Caco-2 (cell line): ENCODE measurements at regions of chr2 and their contacts with region 1.

Region 1: GRCh38 chr2:223860809-223861738 is 23.7 kb upstream of the AP1S3 start:
- DNase-seq: peak; percentile 92 to 94
- H3K4me3 ChIP-seq: no peak overlapping the region
- H3K4me3 Mint-ChIP-seq: peak overlapping the region; percentile 76
- H3K27ac Mint-ChIP-seq: peak overlapping the region; percentile 100
- H3K4me1 ChIP-seq: peaks cover 78% of the 10 kb centered on the region
- H3K4me1 Mint-ChIP-seq: peaks cover 66% of the 10 kb centered on the region
- H3K27me3 ChIP-seq: no peaks in the 10 kb centered on the region
- H3K27me3 Mint-ChIP-seq: no peaks in the 10 kb centered on the region
- CTCF ChIP-seq: peak; percentile 28 to 60

Region 2: DNA sequence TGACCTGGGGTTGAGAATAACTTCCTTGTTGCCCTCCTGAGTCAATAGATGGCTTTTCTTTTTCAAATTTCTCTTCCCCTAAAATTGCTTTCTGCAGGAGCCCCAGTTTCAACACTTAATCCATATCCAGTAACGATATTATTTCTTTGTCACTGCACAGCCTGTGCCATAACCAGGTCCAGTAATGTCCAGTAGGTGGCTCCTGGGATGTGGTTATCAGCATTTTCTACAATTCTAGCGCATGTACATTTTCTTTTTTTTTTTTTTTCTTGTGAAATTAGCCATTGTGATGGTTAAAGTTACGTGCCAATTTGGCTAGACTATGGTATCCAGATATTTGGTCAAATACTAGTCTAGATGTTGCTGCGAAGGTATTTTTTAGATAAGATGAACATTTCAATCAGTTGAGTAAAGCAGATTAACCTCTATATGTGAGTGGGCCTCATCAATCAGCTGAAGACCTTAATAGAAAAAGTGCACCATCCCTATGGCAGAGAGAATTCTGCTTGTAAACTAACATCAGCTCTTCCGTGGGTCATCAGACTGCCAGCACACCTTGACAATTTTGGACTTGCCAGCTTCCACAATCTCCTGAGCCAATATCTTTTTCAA is 186.0 kb before region 1 on chr2:
- CTCF ChIA-PET with region 1: interaction called, 3 read pairs
- POLR2A ChIA-PET with region 1: no interaction called
- intact Hi-C with region 1: loop called (anchors 1 kb)
- DNase-seq: peak; percentile 52 to 70
- H3K4me3 ChIP-seq: no peak overlapping the region
- H3K4me3 Mint-ChIP-seq: no peak overlapping the region
- H3K27ac Mint-ChIP-seq: no peak overlapping the region
- H3K4me1 ChIP-seq: no peaks in the 10 kb centered on the region
- H3K4me1 Mint-ChIP-seq: peaks cover 7% of the 10 kb centered on the region
- H3K27me3 ChIP-seq: no peaks in the 10 kb centered on the region
- H3K27me3 Mint-ChIP-seq: peaks cover 3% of the 10 kb centered on the region
- CTCF ChIP-seq: peak; percentile 88 to 97

Region 3: GRCh38 chr2:223734346-223734745 is 126.7 kb before region 1 on chr2:
- CTCF ChIA-PET with region 1: no interaction called
- POLR2A ChIA-PET with region 1: no interaction called
- intact Hi-C with region 1: no loop called
- DNase-seq: no peak
- H3K4me3 ChIP-seq: no peak overlapping the region
- H3K4me3 Mint-ChIP-seq: no peak overlapping the region
- H3K27ac Mint-ChIP-seq: no peak overlapping the region
- H3K4me1 ChIP-seq: peaks cover 5% of the 10 kb centered on the region; the same call in 1 of the 2 replicates
- H3K4me1 Mint-ChIP-seq: no peaks in the 10 kb centered on the region
- H3K27me3 ChIP-seq: no peaks in the 10 kb centered on the region
- H3K27me3 Mint-ChIP-seq: no peaks in the 10 kb centered on the region
- CTCF ChIP-seq: no peak

Region 4: GRCh38 chr2:223744573-223744972 is 116.5 kb before region 1 on chr2:
- CTCF ChIA-PET with region 1: interaction called, 7 read pairs
- POLR2A ChIA-PET with region 1: no interaction called
- intact Hi-C with region 1: loop called (anchors 1 kb)
- DNase-seq: peak; percentile 89 to 90
- H3K4me3 ChIP-seq: no peak overlapping the region
- H3K4me3 Mint-ChIP-seq: peak overlapping the region; percentile 52
- H3K27ac Mint-ChIP-seq: peak overlapping the region; percentile 85
- H3K4me1 ChIP-seq: peaks cover 34% of the 10 kb centered on the region
- H3K4me1 Mint-ChIP-seq: peaks cover 37% of the 10 kb centered on the region
- H3K27me3 ChIP-seq: no peaks in the 10 kb centered on the region
- H3K27me3 Mint-ChIP-seq: no peaks in the 10 kb centered on the region
- CTCF ChIP-seq: no peak

Region 5: DNA sequence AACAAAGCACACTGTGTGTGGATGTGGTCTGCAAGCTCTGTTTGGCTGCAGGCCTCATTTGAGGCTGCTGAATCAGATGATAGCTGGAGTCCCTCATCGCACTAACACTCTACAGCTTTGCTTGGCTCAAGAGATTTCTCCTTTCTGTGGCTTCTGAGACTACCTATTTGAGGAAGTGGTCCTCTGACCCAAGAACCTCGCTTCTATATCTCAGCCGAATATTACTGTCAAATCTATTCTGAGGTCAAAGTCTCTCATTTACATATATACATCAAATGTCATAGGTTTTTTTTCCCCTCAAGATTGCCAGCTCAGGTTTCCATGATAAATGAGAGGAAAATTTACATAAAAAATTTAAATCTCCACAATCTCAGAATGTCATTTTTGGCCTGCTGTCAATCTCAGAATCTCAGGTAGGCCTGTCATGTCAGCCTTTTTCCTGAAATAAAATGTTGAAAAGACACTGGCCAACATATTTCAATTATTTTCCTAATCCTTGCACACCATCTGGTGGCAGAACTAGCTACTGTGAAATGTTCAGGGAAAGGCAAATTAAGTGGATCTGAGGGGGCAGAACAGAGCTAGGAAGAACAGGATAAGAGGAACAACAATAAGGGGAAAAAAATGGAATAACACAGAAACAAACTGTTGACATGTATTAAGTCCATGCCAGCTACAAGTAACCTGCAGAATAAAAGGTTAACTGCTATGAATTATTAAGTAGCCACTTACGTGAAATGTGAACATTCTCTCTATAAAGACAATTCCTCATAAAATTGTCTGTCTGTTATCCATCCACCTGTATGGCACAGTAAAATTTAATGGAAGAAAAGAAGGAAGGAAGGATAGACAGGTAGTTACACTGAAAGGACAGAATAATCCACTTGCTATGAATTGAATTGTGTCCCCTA is 63.0 kb before region 1 on chr2:
- CTCF ChIA-PET with region 1: interaction called, 11 read pairs
- POLR2A ChIA-PET with region 1: no interaction called
- intact Hi-C with region 1: loop called (anchors 1 kb)
- DNase-seq: peak in 1 of 2 experiments; percentile 50
- H3K4me3 ChIP-seq: no peak overlapping the region
- H3K4me3 Mint-ChIP-seq: peak overlapping the region; percentile 12
- H3K27ac Mint-ChIP-seq: peak overlapping the region; percentile 75
- H3K4me1 ChIP-seq: peaks cover 90% of the 10 kb centered on the region
- H3K4me1 Mint-ChIP-seq: peaks cover 55% of the 10 kb centered on the region
- H3K27me3 ChIP-seq: no peaks in the 10 kb centered on the region
- H3K27me3 Mint-ChIP-seq: no peaks in the 10 kb centered on the region
- CTCF ChIP-seq: peak; percentile 56 to 72

Region 6: DNA sequence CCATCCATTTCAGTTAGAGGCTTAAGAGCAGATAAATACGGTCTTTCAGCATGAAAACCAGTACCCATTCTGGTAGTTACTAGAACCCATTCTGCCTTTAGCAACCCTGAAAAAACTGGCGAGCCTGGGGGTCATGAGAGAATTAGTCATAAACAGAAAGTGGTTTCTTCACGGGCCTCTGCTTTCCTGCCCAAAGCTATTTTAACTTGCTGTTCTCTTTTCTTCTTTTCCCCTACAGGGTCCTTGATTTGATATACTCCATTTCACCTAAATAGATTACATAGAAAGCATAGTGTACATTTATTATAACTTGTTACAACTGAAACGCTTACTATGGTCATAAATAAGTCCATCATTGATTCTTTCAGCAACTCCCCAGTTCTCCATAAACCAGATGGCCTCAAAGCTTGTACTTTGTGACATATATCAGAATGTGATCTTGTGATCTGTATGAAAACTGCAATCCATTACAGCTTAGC is 35.8 kb after region 1 on chr2:
- CTCF ChIA-PET with region 1: no interaction called
- POLR2A ChIA-PET with region 1: no interaction called
- intact Hi-C with region 1: no loop called
- DNase-seq: no peak
- H3K4me3 ChIP-seq: no peak overlapping the region
- H3K4me3 Mint-ChIP-seq: no peak overlapping the region
- H3K27ac Mint-ChIP-seq: no peak overlapping the region
- H3K4me1 ChIP-seq: 0 out of 2 replicates have a peak, but pooled peaks cover 4% of the 10 kb centered on the region
- H3K4me1 Mint-ChIP-seq: peaks cover 12% of the 10 kb centered on the region
- H3K27me3 ChIP-seq: no peaks in the 10 kb centered on the region
- H3K27me3 Mint-ChIP-seq: no peaks in the 10 kb centered on the region
- CTCF ChIP-seq: no peak

Region 7: DNA sequence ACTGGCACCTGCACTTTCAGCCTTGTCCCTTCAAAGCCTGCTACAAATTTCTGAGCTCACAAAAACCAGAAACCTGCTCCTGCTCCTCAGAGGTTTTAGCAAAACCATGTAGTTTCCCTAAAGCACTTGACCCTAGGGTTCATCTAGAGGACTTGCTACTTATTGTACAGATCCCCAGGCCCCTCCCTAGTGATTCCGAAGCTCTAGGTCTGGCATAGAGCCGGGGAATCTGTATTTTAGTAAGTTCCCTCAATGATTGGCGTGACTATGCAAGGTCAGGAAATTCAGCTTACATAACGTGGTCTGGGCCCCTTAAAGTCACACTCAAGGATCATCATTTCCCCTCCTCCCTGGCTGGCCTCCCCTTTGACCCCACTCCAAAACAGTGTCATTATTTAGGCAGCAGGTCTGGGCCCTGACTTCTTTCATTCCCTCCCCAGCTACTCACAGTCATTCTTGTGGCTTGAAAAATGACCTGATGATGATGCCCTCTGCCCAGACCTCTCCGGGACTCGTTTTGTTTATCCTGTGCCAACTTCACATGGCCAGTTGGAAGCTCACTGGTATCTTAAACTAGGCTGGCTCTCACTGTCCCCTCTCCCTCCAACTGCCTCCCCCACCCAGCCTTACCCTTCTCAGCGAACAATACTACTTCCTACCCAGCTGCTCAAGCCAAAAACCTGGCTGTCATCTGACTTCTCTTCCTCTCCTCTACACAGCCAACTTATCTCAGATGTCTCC is 48.1 kb after region 1 on chr2:
- CTCF ChIA-PET with region 1: interaction called, 5 read pairs
- POLR2A ChIA-PET with region 1: no interaction called
- intact Hi-C with region 1: loop called (anchors 1 kb)
- DNase-seq: peak in 1 of 2 experiments; percentile 48
- H3K4me3 ChIP-seq: no peak overlapping the region
- H3K4me3 Mint-ChIP-seq: peak overlapping the region; percentile 57
- H3K27ac Mint-ChIP-seq: peak overlapping the region; percentile 80
- H3K4me1 ChIP-seq: peaks cover 41% of the 10 kb centered on the region
- H3K4me1 Mint-ChIP-seq: peaks cover 37% of the 10 kb centered on the region
- H3K27me3 ChIP-seq: no peaks in the 10 kb centered on the region
- H3K27me3 Mint-ChIP-seq: no peaks in the 10 kb centered on the region
- CTCF ChIP-seq: no peak

Region 8: DNA sequence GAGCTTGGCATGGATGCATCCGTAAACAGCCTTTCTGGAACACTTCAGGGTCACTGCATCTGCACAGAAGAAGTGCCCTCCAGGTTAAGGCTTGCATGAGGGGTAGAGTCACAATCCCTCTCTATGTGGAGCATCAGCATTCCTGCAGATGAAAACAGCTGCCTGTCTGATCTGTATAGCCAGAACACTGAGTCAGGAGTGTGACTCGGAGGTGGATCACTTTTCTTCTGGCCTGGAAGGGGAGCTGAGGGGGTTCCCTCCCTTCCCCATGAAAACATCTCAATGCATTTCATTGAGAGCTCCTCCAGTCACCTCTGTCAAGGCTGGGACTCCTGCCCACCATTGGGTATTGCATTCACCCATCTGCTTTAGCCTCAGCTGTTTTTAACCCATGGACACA is 250.5 kb after region 1 on chr2:
- CTCF ChIA-PET with region 1: no interaction called
- POLR2A ChIA-PET with region 1: no interaction called
- intact Hi-C with region 1: no loop called
- DNase-seq: no peak
- H3K4me3 ChIP-seq: no peak overlapping the region
- H3K4me3 Mint-ChIP-seq: no peak overlapping the region
- H3K27ac Mint-ChIP-seq: no peak overlapping the region
- H3K4me1 ChIP-seq: no peaks in the 10 kb centered on the region
- H3K4me1 Mint-ChIP-seq: no peaks in the 10 kb centered on the region
- H3K27me3 ChIP-seq: no peaks in the 10 kb centered on the region
- H3K27me3 Mint-ChIP-seq: peaks cover 15% of the 10 kb centered on the region
- CTCF ChIP-seq: no peak

Region 9: GRCh38 chr2:224357098-224357901 is 496.2 kb after region 1 on chr2:
- CTCF ChIA-PET with region 1: no interaction called
- POLR2A ChIA-PET with region 1: interaction called, 10 read pairs
- intact Hi-C with region 1: no loop called
- DNase-seq: peak; percentile 59 to 79
- H3K4me3 ChIP-seq: no peak overlapping the region
- H3K4me3 Mint-ChIP-seq: no peak overlapping the region
- H3K27ac Mint-ChIP-seq: no peak overlapping the region
- H3K4me1 ChIP-seq: no peaks in the 10 kb centered on the region
- H3K4me1 Mint-ChIP-seq: no peaks in the 10 kb centered on the region
- H3K27me3 ChIP-seq: no peaks in the 10 kb centered on the region
- H3K27me3 Mint-ChIP-seq: peaks cover 19% of the 10 kb centered on the region
- CTCF ChIP-seq: peak; percentile 80 to 95

Region 10: DNA sequence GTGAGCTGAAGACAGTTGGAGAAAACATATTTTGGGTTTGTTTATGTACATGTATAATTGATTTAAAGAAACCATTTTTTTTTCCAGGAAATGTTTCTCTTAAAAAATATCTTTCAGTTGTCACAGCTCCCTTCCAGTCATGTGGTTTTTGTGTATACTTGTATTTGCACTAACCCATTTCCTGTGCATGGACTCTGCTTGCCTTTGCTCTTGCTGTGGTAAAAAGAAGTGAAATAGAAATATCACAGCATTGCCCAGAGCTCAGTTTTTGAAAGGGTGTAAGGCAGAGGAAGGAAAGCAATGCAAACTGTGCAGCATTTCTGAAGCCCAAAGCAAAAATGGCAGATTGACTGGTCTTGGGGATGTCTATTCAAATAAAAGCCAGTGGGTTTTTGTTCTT is 1191.6 kb after region 1 on chr2:
- CTCF ChIA-PET with region 1: no interaction called
- POLR2A ChIA-PET with region 1: no interaction called
- intact Hi-C with region 1: no loop called
- DNase-seq: no peak
- H3K4me3 ChIP-seq: no peak overlapping the region
- H3K4me3 Mint-ChIP-seq: no peak overlapping the region
- H3K27ac Mint-ChIP-seq: no peak overlapping the region
- H3K4me1 ChIP-seq: no peaks in the 10 kb centered on the region
- H3K4me1 Mint-ChIP-seq: no peaks in the 10 kb centered on the region
- H3K27me3 ChIP-seq: no peaks in the 10 kb centered on the region
- H3K27me3 Mint-ChIP-seq: no peaks in the 10 kb centered on the region
- CTCF ChIP-seq: no peak